ENCODE measurements at regions of chr4 and their contacts with region 1.

Region 1: DNA sequence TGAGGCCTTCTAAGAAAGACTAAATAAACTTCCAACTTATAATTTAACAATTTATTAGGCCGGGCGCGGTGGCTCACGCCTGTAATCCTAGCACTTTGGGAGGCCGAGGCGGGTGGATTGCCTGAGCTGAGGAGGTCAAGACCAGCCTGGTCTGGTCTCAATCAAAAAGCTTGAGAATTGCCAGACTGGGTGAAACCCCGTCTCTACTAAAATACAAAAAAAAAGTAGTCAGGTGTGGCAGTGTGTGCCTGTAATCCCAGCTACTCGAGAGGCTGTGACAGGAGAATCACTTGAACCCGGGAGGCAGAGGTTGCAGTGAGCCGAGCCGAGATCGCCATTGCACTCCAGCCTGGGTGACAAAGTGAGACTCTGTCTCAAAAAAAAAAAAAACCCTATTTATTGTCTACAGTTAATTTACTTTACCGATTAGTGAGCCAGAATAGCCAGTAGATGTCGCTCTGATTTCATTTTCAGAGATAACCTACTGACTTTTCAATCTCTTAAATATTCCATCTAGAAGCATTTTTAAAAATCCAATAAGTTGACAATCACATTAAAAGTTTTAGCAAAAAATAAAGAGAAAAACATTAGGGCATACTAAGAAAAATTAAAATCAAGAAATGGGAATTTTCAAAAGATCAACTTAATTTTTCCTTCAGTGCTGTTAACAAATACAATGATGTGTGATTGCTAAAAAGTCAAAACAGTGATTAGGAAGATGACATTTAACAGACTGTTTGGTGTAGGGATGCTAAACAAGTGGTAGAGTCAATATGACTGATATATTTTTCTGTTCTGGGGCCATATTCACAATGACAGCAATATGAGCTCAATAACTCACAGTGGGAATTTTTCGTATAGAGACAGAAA is 4.3 kb upstream of the SHROOM3 start:
- DNase-seq: no peak
- ATAC-seq: peak in 1 of 4 donors; percentile 41
- H3K4me3 ChIP-seq: no peak overlapping the region
- H3K27ac ChIP-seq: no peak overlapping the region
- H3K4me1 ChIP-seq: peaks cover 0 to 11% (median 0%) of the 10 kb centered on the region in 12 donors
- H3K27me3 ChIP-seq: peaks cover 0 to 14% (median 0%) of the 10 kb centered on the region in 9 donors
- CTCF ChIP-seq: peak; percentile 41 to 76 (median 68)
- POLR2A ChIP-seq: no peak

Region 2: GRCh38 chr4:76499461-76499860 is 68.7 kb after region 1 on chr4:
- intact Hi-C with region 1: loop called in 9 of 10 experiments (anchors 2 to 5 kb)
- DNase-seq: no peak
- ATAC-seq: no peak
- H3K4me3 ChIP-seq: no peak overlapping the region
- H3K27ac ChIP-seq: no peak overlapping the region
- H3K4me1 ChIP-seq: peaks cover 0 to 8% (median 0%) of the 10 kb centered on the region in 12 donors
- H3K27me3 ChIP-seq: no peaks in the 10 kb centered on the region
- CTCF ChIP-seq: no peak
- POLR2A ChIP-seq: no peak

Region 3: GRCh38 chr4:76758290-76758882 is 327.6 kb after region 1 on chr4:
- intact Hi-C with region 1: loop called in 8 of 10 experiments (anchors 5 to 10 kb)
- DNase-seq: no peak
- ATAC-seq: peak; percentile 36 to 66 (median 52)
- H3K4me3 ChIP-seq: no peak overlapping the region
- H3K27ac ChIP-seq: peak overlapping the region in 2 of 12 donors; percentile 2 to 5
- H3K4me1 ChIP-seq: peaks cover 0 to 29% (median 10%) of the 10 kb centered on the region in 12 donors
- H3K27me3 ChIP-seq: peaks cover 0 to 3% (median 0%) of the 10 kb centered on the region in 9 donors
- CTCF ChIP-seq: peak; percentile 66 to 87 (median 76)
- POLR2A ChIP-seq: no peak

Region 4: DNA sequence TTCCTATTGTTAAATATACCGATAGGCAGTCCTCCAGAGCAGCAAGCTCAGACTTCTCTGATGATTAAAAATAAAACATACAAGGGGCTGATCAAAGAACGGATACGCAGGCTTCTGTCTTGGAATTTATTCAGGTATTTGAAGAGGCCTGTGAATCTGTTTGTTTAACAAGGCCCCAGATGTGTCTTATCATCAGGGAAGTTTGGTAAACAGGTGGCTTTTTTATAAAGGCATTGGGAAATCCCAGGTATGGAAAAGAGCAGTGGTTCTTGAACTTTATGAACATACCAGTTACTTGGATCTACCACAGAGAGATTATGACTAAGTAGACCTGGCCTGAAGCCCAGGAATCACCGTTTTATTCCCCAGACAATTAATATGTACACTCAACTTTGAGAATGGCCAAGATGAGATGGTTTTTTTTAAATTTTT is 419.3 kb after region 1 on chr4:
- intact Hi-C with region 1: no loop called
- DNase-seq: no peak
- ATAC-seq: no peak
- H3K4me3 ChIP-seq: no peak overlapping the region
- H3K27ac ChIP-seq: no peak overlapping the region
- H3K4me1 ChIP-seq: no peaks in the 10 kb centered on the region
- H3K27me3 ChIP-seq: no peaks in the 10 kb centered on the region
- CTCF ChIP-seq: no peak
- POLR2A ChIP-seq: no peak

Region 5: DNA sequence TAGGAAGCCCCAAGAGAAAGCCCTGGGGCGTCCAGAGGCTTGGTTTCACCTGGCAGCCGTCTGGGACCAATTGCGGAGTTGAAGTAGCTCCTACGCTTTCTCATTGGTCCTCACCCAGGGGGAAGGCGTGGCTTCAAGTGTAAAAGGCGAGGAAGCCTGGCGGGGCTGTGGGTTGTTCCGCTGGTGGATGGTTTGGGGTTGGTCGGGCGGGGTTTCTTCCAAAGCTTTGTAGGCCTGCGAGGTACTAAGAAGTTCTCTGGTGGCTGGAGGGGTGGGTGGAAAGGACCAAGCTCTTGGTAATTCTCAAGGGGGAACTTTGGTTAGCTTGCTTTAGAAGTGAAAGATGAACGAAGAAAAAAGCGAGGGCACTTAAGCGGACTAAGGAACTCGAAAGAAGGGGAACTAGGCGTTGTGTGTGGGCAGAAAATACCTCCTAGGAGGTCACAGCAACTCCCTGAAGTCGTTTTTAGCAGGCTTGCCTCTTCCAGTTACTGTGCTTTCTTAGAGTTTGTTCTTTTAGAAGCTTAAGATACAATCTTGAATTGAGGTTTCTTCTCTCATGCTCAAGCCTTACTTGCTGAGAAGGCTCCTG is 762.9 kb after region 1 on chr4:
- intact Hi-C with region 1: loop called in 1 of 10 experiments (anchors 10 kb)
- DNase-seq: peak; percentile 43 to 77 (median 59)
- ATAC-seq: peak in 3 of 4 donors; percentile 42 to 76 (median 74)
- H3K4me3 ChIP-seq: peak overlapping the region in 4 of 12 donors; percentile 10 to 48 (median 34)
- H3K27ac ChIP-seq: peak overlapping the region in 1 of 12 donors; percentile 74
- H3K4me1 ChIP-seq: peaks cover 0 to 20% (median 0%) of the 10 kb centered on the region in 12 donors
- H3K27me3 ChIP-seq: no peaks in the 10 kb centered on the region
- CTCF ChIP-seq: no peak
- POLR2A ChIP-seq: no peak

Region 6: DNA sequence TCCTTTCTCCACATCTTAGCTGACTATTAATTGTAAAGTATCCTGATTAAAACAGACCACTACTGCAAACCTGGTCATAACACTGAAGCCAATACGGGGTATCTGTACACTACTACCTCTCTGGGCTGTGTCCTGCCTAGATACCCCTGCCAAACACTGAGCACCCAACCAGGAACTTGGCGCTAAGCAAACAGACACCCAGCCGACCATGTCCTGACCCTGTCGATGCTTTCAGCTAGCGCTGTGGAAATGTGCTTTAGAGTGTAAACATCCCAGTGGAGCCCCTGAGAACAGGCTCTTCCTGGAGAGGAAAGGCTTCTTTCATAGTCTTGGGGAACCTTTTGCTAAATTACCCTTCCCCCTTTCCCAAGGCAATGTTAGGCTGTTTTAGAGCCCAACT is 779.2 kb after region 1 on chr4:
- intact Hi-C with region 1: loop called in 3 of 10 experiments (anchors 5 to 10 kb)
- DNase-seq: no peak
- ATAC-seq: no peak
- H3K4me3 ChIP-seq: no peak overlapping the region
- H3K27ac ChIP-seq: no peak overlapping the region
- H3K4me1 ChIP-seq: no peaks in the 10 kb centered on the region
- H3K27me3 ChIP-seq: no peaks in the 10 kb centered on the region
- CTCF ChIP-seq: no peak
- POLR2A ChIP-seq: no peak